SK-N-SH (cell line): ENCODE measurements at regions of chr7 and their contacts with region 1.

Region 1: DNA sequence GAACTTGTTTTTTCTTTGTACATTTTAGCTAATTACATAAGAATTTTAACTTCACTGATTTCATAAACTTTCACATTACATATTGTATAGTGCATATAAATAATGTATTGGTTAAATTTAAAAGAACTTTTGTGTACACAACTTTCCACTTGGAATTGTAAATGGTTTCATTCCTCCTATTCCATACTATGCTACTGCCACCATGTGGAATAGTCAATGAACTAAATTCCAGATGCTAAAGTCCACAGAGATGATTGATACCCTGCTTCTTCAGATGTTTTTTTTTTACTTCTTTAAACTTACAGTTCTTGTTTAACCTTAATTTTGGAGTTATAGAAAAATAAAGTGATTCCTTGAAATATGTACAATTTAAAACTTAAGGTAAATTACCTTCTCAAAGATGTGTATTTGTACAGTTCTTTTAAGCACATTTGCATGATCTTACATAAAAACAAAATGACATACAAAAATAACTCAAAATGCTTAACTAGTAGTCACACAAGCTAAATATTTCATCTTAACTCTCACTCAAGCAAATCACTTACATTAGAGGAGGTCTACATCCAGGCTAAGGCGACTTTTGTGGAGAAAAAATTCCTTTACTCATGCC is 247.6 kb upstream of the HGF start:
- DNase-seq: peak; percentile 33
- H3K4me3 ChIP-seq: no peak overlapping the region
- H3K27ac ChIP-seq: peak overlapping the region in 1 of 2 experiments; percentile 28; a peak in 2 of 4 replicates
- H3K4me1 ChIP-seq: peaks cover 13 to 19% of the 10 kb centered on the region in 2 experiments
- H3K27me3 ChIP-seq: no peaks in the 10 kb centered on the region
- CTCF ChIP-seq: peak; percentile 94
- EP300 ChIP-seq: no peak
- RAD21 ChIP-seq: peak; percentile 92

Region 2: GRCh38 chr7:81482600-81483186 is 534.7 kb before region 1 on chr7:
- CTCF ChIA-PET with region 1: interaction called, 12 read pairs
- POLR2A ChIA-PET with region 1: no interaction called
- DNase-seq: peak; percentile 35
- H3K4me3 ChIP-seq: no peak overlapping the region
- H3K27ac ChIP-seq: no peak overlapping the region
- H3K4me1 ChIP-seq: peaks cover 0 to 3% of the 10 kb centered on the region in 2 experiments; a peak in 2 of 4 replicates
- H3K27me3 ChIP-seq: no peaks in the 10 kb centered on the region
- CTCF ChIP-seq: peak; percentile 80
- EP300 ChIP-seq: no peak
- RAD21 ChIP-seq: peak; percentile 84

Region 3: GRCh38 chr7:81488210-81488609 is 529.2 kb before region 1 on chr7:
- CTCF ChIA-PET with region 1: interaction called, 12 read pairs
- POLR2A ChIA-PET with region 1: no interaction called
- DNase-seq: no peak
- H3K4me3 ChIP-seq: no peak overlapping the region
- H3K27ac ChIP-seq: no peak overlapping the region
- H3K4me1 ChIP-seq: peaks cover 0 to 2% of the 10 kb centered on the region in 2 experiments; a peak in 2 of 4 replicates
- H3K27me3 ChIP-seq: no peaks in the 10 kb centered on the region
- CTCF ChIP-seq: no peak
- EP300 ChIP-seq: no peak
- RAD21 ChIP-seq: no peak

Region 4: GRCh38 chr7:81715984-81716588 is 301.4 kb before region 1 on chr7:
- CTCF ChIA-PET with region 1: interaction called, 17 read pairs
- POLR2A ChIA-PET with region 1: no interaction called
- DNase-seq: peak; percentile 28
- H3K4me3 ChIP-seq: no peak overlapping the region
- H3K27ac ChIP-seq: peak overlapping the region in 1 of 2 experiments; percentile 28; a peak in 1 of 4 replicates
- H3K4me1 ChIP-seq: peaks cover 0 to 5% of the 10 kb centered on the region in 2 experiments; a peak in 2 of 4 replicates
- H3K27me3 ChIP-seq: no peaks in the 10 kb centered on the region
- CTCF ChIP-seq: peak; percentile 67
- EP300 ChIP-seq: 0 out of 4 replicates have a peak, but pooled peaks of 1 of the 2 experiments have one; percentile 44
- RAD21 ChIP-seq: peak; percentile 97

Region 5: DNA sequence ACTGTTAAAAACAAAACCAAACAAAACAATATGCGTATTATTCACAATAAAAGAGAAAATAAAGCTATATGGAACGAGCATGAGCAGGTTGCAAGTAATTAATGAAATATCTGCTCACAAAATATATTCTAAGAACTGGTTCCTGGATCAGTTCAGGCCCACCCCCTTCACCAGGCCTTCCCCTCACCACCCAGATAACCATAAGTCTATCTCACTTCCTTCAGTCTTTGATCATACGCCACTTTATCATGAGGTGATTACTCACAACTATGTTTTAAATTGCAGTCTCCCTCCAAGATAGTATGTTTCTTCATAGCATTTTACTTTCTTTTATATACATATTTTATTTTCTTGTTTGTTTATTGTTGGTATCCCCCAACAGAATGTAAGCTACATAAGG is 15.5 kb after region 1 on chr7:
- CTCF ChIA-PET with region 1: interaction called, 13 read pairs
- POLR2A ChIA-PET with region 1: no interaction called
- DNase-seq: no peak
- H3K4me3 ChIP-seq: no peak overlapping the region
- H3K27ac ChIP-seq: no peak overlapping the region
- H3K4me1 ChIP-seq: peaks cover 8 to 23% of the 10 kb centered on the region in 2 experiments
- H3K27me3 ChIP-seq: no peaks in the 10 kb centered on the region
- CTCF ChIP-seq: no peak
- EP300 ChIP-seq: no peak
- RAD21 ChIP-seq: no peak

Region 6: GRCh38 chr7:82044497-82045080 is 27.1 kb after region 1 on chr7:
- CTCF ChIA-PET with region 1: interaction called, 14 read pairs
- POLR2A ChIA-PET with region 1: no interaction called
- DNase-seq: peak; percentile 16
- H3K4me3 ChIP-seq: no peak overlapping the region
- H3K27ac ChIP-seq: no peak overlapping the region
- H3K4me1 ChIP-seq: peaks cover 14 to 29% of the 10 kb centered on the region in 2 experiments; a peak in 3 of 4 replicates
- H3K27me3 ChIP-seq: no peaks in the 10 kb centered on the region
- CTCF ChIP-seq: peak; percentile 89
- EP300 ChIP-seq: 0 out of 4 replicates have a peak, but pooled peaks of 1 of the 2 experiments have one; percentile 16
- RAD21 ChIP-seq: peak; percentile 97

Region 7: DNA sequence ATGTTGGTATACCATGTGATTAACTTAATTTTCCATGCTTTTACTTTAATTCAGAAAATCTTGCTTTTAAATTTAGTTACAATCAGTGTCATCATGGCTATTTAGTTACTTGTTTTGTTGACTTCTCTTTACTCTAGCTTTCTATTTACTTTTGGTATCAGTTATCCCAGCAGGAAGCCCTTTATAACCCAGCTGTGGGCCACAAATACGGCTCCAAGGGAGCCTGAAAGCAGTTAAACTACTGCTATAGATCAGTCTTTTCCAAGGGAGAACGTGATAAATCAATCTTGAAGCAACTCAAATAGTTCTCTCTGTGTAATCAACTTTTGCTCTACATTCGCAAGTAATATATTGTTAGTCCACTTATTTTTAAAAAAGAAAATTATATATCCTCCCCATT is 138.7 kb after region 1 on chr7:
- CTCF ChIA-PET with region 1: no interaction called
- POLR2A ChIA-PET with region 1: no interaction called
- DNase-seq: no peak
- H3K4me3 ChIP-seq: no peak overlapping the region
- H3K27ac ChIP-seq: no peak overlapping the region
- H3K4me1 ChIP-seq: no peaks in the 10 kb centered on the region; a peak in 1 of 4 replicates
- H3K27me3 ChIP-seq: no peaks in the 10 kb centered on the region
- CTCF ChIP-seq: no peak
- EP300 ChIP-seq: no peak
- RAD21 ChIP-seq: no peak